Uterus (tissue), 4 donors: ENCODE measurements at regions of chr14 and their contacts with region 1.

Region 1: DNA sequence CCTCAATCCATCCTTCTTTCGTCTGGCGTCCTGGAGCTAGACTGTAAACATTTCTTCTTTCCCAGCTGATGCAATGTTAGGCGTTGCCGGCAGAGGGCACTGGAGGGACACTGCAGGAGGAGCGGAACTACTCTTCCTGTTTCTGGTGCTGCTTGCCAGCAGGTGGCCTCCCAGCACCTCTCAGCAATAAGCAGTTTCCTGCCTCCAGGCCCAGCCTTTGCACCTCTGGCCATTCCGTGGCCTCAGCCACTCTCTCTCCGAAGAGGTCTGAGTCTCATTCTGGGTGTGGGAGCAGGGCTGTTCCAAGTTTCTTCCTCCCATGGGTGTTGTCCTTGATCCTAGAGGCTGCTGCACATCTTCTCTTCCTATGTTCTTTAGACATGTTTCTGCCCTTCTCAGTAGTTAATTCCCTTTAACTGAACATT is 7.5 kb upstream of the ASPG start:
- DNase-seq: peak; percentile 82 to 83
- H3K4me3 ChIP-seq: no peak overlapping the region
- H3K27ac ChIP-seq: no peak overlapping the region
- H3K4me1 ChIP-seq: no peaks in the 10 kb centered on the region
- H3K27me3 ChIP-seq: no peaks in the 10 kb centered on the region
- CTCF ChIP-seq: peak; percentile 97 to 100 (median 98)
- POLR2A ChIP-seq: no peak

Region 2: GRCh38 chr14:103905842-103906456 is 172.1 kb before region 1 on chr14:
- intact Hi-C with region 1: no loop called
- DNase-seq: no peak
- H3K4me3 ChIP-seq: no peak overlapping the region
- H3K27ac ChIP-seq: no peak overlapping the region
- H3K4me1 ChIP-seq: no peaks in the 10 kb centered on the region
- H3K27me3 ChIP-seq: no peaks in the 10 kb centered on the region
- CTCF ChIP-seq: no peak
- POLR2A ChIP-seq: no peak

Region 3: DNA sequence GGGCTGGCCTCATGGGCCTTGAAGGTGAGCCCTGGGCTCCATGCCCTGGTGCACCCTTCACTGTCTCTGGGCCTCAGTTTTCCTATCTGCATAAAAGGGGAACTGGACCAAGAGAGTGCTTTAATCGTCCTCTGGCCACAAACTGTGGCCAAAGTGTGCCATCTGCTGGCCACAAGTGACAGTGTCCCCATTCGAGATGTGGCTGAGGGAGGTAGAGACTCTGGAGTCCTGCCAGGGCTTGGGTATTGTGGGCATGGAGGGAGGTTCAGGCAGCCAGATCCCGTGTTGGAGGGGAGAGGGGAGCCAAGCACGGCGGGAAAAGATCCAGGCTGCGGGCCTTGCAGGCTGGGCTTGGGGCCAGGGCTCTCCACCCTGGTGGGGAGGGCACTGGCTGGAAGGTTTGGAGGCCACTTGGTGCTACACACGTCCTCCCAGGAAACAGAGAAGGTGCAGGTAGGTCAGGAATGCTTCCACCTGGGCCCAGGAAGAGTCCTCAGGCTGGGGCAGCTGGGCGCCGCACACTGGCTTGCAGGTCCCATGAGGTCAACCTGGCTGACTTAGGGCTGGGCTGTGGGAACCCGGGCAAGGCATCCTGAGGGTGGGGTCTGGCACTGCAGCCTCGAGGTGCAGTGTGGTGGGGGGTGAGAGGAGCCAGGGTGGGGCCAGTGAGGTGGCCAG is 53.1 kb after region 1 on chr14:
- intact Hi-C with region 1: no loop called
- DNase-seq: no peak
- H3K4me3 ChIP-seq: no peak overlapping the region
- H3K27ac ChIP-seq: no peak overlapping the region
- H3K4me1 ChIP-seq: no peaks in the 10 kb centered on the region
- H3K27me3 ChIP-seq: no peaks in the 10 kb centered on the region
- CTCF ChIP-seq: peak in 2 of 4 experiments; percentile 38 to 61
- POLR2A ChIP-seq: no peak

Region 4: GRCh38 chr14:104436047-104436591 is 358.1 kb after region 1 on chr14:
- intact Hi-C with region 1: no loop called
- DNase-seq: no peak
- H3K4me3 ChIP-seq: no peak overlapping the region
- H3K27ac ChIP-seq: no peak overlapping the region
- H3K4me1 ChIP-seq: peaks cover 0 to 7% of the 10 kb centered on the region in 2 donors
- H3K27me3 ChIP-seq: no peaks in the 10 kb centered on the region
- CTCF ChIP-seq: no peak
- POLR2A ChIP-seq: no peak

Region 5: DNA sequence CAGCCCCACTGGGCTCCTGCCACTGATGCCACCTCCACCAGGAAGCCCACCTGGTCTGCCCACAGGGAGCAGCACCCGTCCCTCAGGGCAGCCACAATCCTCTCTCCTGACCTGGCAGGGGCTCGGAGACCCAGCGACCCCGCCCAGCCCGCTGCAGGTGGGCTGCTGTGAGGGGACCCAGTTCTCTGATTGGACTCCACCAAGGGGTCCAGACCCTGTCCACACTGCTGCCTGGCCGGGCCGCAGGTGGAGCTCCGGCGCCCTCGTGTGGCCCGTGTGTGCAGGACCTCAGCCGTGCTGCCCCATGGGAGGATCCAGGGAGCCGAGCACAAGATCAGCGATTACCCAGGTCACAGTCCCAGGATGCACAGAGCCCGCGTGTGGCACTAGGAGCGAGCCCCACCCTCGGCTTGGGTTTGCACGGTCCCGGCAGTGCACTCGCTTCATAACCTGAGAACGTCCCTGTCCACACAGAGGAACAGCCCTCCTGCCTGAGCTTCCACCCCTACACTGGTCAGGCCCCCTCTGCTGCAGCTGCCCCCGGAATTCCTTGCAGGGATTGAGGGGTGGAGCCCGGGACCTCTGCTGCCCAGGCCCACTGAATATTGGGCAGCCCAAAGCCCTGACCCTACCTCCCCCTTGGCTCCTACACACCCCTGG is 562.0 kb after region 1 on chr14:
- intact Hi-C with region 1: loop called (anchors 5 kb)
- DNase-seq: no peak
- H3K4me3 ChIP-seq: no peak overlapping the region
- H3K27ac ChIP-seq: no peak overlapping the region
- H3K4me1 ChIP-seq: no peaks in the 10 kb centered on the region
- H3K27me3 ChIP-seq: no peaks in the 10 kb centered on the region
- CTCF ChIP-seq: peak; percentile 53 to 74 (median 67)
- POLR2A ChIP-seq: no peak